Heart left ventricle (tissue), 16 donors: ENCODE measurements at regions of chr18 and their contacts with region 1.

Region 1: DNA sequence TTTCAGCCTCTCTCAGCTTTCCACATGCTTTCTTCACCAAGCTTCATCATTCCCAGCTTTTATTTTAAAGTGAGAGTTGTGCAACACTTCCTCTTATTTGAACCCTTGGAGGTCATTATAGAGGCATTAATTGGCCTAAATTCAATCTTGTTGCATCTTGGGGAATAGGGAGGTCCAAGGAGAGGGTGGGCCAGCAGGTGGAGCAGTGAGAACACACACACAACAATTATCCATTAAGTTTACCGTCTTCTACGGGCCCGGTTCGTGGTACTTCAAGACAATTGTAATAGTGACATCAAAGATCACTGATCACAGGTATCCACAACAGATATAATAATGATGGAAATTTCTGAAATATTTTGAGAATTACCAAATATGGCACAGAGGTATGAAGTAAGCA is 457.2 kb upstream of the SMIM21 start:
- DNase-seq: no peak
- ATAC-seq: no peak
- H3K4me3 ChIP-seq: no peak overlapping the region
- H3K27ac ChIP-seq: no peak overlapping the region
- H3K4me1 ChIP-seq: no peaks in the 10 kb centered on the region
- H3K27me3 ChIP-seq: no peaks in the 10 kb centered on the region
- CTCF ChIP-seq: peak in 11 of 12 donors; percentile 19 to 54 (median 40)
- POLR2A ChIP-seq: no peak

Region 2: GRCh38 chr18:75752740-75753263 is 131.9 kb before region 1 on chr18:
- intact Hi-C with region 1: no loop called
- DNase-seq: no peak
- ATAC-seq: no peak
- H3K4me3 ChIP-seq: no peak overlapping the region
- H3K27ac ChIP-seq: no peak overlapping the region
- H3K4me1 ChIP-seq: no peaks in the 10 kb centered on the region
- H3K27me3 ChIP-seq: no peaks in the 10 kb centered on the region
- CTCF ChIP-seq: no peak
- POLR2A ChIP-seq: no peak

Region 3: DNA sequence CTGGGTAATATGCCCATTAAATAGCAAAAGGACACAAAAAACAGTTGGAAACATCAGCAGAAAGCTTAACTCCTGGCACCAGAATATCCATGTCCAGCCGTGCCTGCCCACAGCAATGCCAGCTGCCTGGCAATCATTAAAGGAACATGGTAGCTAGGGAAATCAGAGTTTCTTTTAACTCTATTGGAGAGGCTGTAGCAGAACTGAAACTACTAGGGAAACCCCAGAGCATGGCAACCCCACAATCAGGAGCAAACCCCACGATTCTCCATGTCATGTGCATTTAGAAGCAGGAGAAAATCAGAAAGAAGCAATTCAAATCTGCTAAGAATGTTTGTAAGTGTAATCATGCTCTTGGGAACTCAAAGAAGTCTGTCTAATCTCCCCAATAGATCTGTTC is 48.2 kb before region 1 on chr18:
- intact Hi-C with region 1: no loop called
- DNase-seq: no peak
- ATAC-seq: no peak
- H3K4me3 ChIP-seq: no peak overlapping the region
- H3K27ac ChIP-seq: no peak overlapping the region
- H3K4me1 ChIP-seq: no peaks in the 10 kb centered on the region
- H3K27me3 ChIP-seq: peaks cover 0 to 5% (median 0%) of the 10 kb centered on the region in 9 donors
- CTCF ChIP-seq: no peak
- POLR2A ChIP-seq: no peak

Region 4: GRCh38 chr18:75923169-75923568 is 38.4 kb after region 1 on chr18:
- intact Hi-C with region 1: loop called in 1 of 10 experiments (anchors 5 kb)
- DNase-seq: peak in 4 of 5 donors; percentile 80 to 91 (median 86)
- ATAC-seq: peak; percentile 98 to 100 (median 100)
- H3K4me3 ChIP-seq: no peak overlapping the region
- H3K27ac ChIP-seq: peak overlapping the region in 4 of 12 donors; percentile 13 to 52 (median 34)
- H3K4me1 ChIP-seq: peaks cover 0 to 12% (median 0%) of the 10 kb centered on the region in 12 donors
- H3K27me3 ChIP-seq: no peaks in the 10 kb centered on the region
- CTCF ChIP-seq: no peak
- POLR2A ChIP-seq: no peak

Region 5: GRCh38 chr18:76064998-76065397 is 180.3 kb after region 1 on chr18:
- intact Hi-C with region 1: no loop called
- DNase-seq: no peak
- ATAC-seq: peak in 1 of 4 donors; percentile 45
- H3K4me3 ChIP-seq: no peak overlapping the region
- H3K27ac ChIP-seq: no peak overlapping the region
- H3K4me1 ChIP-seq: no peaks in the 10 kb centered on the region
- H3K27me3 ChIP-seq: peaks cover 0 to 5% (median 0%) of the 10 kb centered on the region in 9 donors
- CTCF ChIP-seq: no peak
- POLR2A ChIP-seq: no peak

Region 6: DNA sequence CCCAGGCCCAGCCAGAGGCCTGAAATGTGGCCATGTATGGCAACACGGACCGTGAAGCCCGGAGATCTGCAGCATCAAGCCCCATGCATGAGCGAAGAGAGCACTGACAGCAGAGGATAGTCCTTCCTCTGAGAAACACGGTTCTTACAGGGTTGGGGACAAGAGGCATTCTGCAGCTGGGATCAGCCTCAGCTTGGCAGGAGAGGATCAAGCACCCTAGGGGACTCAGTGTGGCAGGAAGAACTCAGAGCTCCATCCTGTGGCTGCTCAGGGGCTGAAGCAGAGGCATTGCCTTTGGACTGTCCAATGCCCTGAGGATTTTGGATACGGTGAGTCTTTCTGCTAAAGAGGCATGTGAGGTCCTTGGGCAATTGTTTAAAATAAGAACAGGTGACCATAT is 241.6 kb after region 1 on chr18:
- intact Hi-C with region 1: loop called in 9 of 10 experiments (anchors 2 to 10 kb)
- DNase-seq: peak in 1 of 5 donors; percentile 34
- ATAC-seq: peak in 3 of 4 donors; percentile 65 to 78 (median 74)
- H3K4me3 ChIP-seq: no peak overlapping the region
- H3K27ac ChIP-seq: no peak overlapping the region
- H3K4me1 ChIP-seq: no peaks in the 10 kb centered on the region
- H3K27me3 ChIP-seq: no peaks in the 10 kb centered on the region
- CTCF ChIP-seq: peak in 10 of 12 donors; percentile 6 to 42 (median 26)
- POLR2A ChIP-seq: no peak

Region 7: GRCh38 chr18:76252880-76253279 is 368.2 kb after region 1 on chr18:
- intact Hi-C with region 1: loop called in 6 of 10 experiments (anchors 5 to 10 kb)
- DNase-seq: no peak
- ATAC-seq: no peak
- H3K4me3 ChIP-seq: no peak overlapping the region
- H3K27ac ChIP-seq: no peak overlapping the region
- H3K4me1 ChIP-seq: peaks cover 0 to 7% (median 0%) of the 10 kb centered on the region in 12 donors
- H3K27me3 ChIP-seq: peaks cover 0 to 16% (median 0%) of the 10 kb centered on the region in 9 donors
- CTCF ChIP-seq: peak in 5 of 12 donors; percentile 26 to 53 (median 46)
- POLR2A ChIP-seq: no peak

Region 8: DNA sequence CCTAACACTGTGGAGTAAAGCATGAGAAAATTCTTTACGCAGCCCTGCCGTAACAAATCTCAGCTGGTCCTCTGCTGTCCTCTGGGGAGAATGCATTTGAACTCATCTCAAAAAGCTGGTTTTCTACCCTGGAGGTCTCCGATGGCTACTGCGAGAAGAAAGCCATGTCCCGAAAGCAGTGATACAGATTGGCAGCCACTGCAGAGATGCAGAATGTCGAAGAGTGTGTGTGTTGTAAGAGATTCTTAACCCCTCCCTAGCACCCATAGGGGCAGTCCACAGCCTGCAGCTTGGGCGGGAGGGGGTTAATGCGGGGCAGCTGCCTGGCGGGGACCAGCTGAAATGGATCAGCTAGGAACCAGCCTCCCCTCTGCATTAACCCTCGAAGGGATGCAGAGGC is 374.4 kb after region 1 on chr18:
- intact Hi-C with region 1: loop called in 6 of 10 experiments (anchors 5 to 10 kb)
- DNase-seq: no peak
- ATAC-seq: peak in 1 of 4 donors; percentile 35
- H3K4me3 ChIP-seq: peak overlapping the region in 1 of 12 donors; percentile 28
- H3K27ac ChIP-seq: no peak overlapping the region
- H3K4me1 ChIP-seq: peaks cover 0 to 7% (median 0%) of the 10 kb centered on the region in 12 donors
- H3K27me3 ChIP-seq: peaks cover 0 to 23% (median 0%) of the 10 kb centered on the region in 9 donors
- CTCF ChIP-seq: no peak
- POLR2A ChIP-seq: no peak

Region 9: GRCh38 chr18:76349067-76349715 is 464.5 kb after region 1 on chr18:
- intact Hi-C with region 1: loop called in 3 of 10 experiments (anchors 5 to 10 kb)
- DNase-seq: peak in 3 of 5 donors; percentile 35 to 43 (median 41)
- ATAC-seq: peak in 1 of 4 donors; percentile 41
- H3K4me3 ChIP-seq: peak overlapping the region in 1 of 12 donors; percentile 23
- H3K27ac ChIP-seq: no peak overlapping the region
- H3K4me1 ChIP-seq: peaks cover 0 to 11% (median 4%) of the 10 kb centered on the region in 12 donors
- H3K27me3 ChIP-seq: no peaks in the 10 kb centered on the region
- CTCF ChIP-seq: peak; percentile 80 to 93 (median 86)
- POLR2A ChIP-seq: no peak